Caco-2 (cell line): ENCODE measurements at regions of chr12 and their contacts with region 1.

Region 1: DNA sequence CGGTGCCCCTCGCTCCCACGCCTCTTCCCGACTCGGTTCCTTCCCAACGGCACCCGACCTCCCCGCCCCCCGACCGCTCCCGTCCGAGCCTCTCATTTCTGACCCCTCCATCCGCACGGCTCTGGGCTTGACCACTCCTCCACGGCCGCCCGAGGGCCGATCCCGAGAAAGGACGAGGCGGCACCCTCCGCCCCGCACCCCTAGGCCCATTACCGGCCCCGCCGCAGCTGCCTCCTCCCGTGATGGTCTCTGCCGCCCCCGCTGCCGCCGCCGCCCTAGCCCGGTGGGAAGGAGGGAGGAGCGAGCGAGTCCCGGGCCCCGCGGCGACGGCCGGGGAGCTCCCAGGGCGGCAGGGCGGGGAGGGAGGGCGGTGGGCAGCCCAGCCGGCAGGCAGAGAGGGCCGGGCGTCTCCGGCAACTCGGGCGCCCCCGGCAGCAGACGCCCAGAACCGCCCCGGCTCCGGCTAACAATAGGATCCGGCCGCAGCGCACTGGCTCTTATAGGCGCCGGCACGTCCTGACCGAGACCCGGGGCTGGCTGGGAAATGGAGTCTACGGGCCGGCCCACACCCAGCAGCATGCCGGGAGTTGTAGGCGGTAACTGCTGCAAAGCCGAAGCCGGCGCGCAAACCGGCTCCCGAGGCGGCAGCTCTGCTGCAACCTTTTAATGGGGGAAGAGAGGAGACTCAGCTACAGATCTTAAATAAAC is at the start of gene CSRNP2:
- DNase-seq: peak; percentile 98 to 99
- H3K4me3 ChIP-seq: peak within 1 kb of the TSS; percentile 85
- H3K4me3 Mint-ChIP-seq: peak within 1 kb of the TSS; percentile 96
- H3K27ac Mint-ChIP-seq: peak within 1 kb of the TSS; percentile 94
- H3K4me1 ChIP-seq: peaks cover 10% of the 10 kb centered on the region; the same call in 1 of the 2 replicates
- H3K4me1 Mint-ChIP-seq: peaks cover 16% of the 10 kb centered on the region
- H3K27me3 ChIP-seq: no peaks in the 10 kb centered on the region
- H3K27me3 Mint-ChIP-seq: no peaks in the 10 kb centered on the region
- CTCF ChIP-seq: peak in 1 of 2 experiments; percentile 2
- total RNA-seq, gene CSRNP2: 39.7 and 44.0 TPM in 2 replicates

Region 2: DNA sequence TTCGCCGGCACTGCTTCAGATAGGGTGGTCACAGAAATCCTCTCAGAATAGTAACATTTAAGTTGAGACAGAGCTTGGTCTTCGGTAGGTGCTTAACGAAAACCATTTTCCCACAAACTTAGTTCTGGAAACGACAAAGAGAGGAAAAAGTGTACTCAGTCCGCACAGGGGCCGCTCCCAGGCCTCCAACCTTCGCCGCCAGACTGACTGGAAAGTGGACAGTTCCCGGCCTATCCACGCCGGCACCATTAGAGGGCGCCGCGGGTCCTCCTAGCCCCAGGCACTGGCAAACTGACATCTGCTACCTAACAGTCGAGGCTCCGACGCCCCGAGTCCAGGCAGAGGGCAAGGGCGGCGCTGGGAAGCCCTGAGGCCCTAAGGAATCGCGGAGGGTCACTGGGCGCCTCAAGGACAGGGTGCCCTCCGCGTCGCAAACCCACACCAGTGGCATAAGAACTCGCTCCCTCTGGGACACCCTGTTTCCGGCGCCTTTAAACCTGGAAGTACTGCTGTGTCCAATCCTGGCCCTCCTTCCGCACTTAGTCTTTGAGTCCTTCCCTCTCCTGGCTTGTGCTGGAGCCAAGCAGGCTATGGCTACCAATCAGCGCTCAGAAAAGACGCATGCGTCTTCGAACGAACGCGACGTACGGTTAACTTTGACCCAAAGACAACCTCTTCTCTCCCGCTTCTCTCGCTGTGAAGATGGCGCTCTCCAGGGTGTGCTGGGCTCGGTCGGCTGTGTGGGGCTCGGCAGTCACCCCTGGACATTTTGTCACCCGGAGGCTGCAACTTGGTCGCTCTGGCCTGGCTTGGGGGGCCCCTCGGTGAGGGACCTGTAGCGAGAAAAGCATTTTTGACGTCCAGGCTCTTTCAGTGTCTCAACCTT is 35.4 kb before region 1 on chr12 and contains the start of gene LETMD1:
- CTCF ChIA-PET with region 1: interaction called, 3 read pairs
- POLR2A ChIA-PET with region 1: interaction called, 16 read pairs
- intact Hi-C with region 1: loop called (anchors 1 kb)
- DNase-seq: peak; percentile 96 to 98
- H3K4me3 ChIP-seq: peak within 1 kb of the TSS; percentile 64
- H3K4me3 Mint-ChIP-seq: peak within 1 kb of the TSS; percentile 99
- H3K27ac Mint-ChIP-seq: peak within 1 kb of the TSS; percentile 96
- H3K4me1 ChIP-seq: no peaks in the 10 kb centered on the region
- H3K4me1 Mint-ChIP-seq: no peaks in the 10 kb centered on the region
- H3K27me3 ChIP-seq: no peaks in the 10 kb centered on the region
- H3K27me3 Mint-ChIP-seq: no peaks in the 10 kb centered on the region
- CTCF ChIP-seq: peak; percentile 93 to 99
- total RNA-seq, gene LETMD1: 90.6 and 95.6 TPM in 2 replicates

Region 3: GRCh38 chr12:51059086-51059485 is 24.2 kb before region 1 on chr12:
- CTCF ChIA-PET with region 1: no interaction called
- POLR2A ChIA-PET with region 1: interaction called, 10 read pairs
- intact Hi-C with region 1: loop called (anchors 2 kb)
- DNase-seq: no peak
- H3K4me3 ChIP-seq: no peak overlapping the region
- H3K4me3 Mint-ChIP-seq: no peak overlapping the region
- H3K27ac Mint-ChIP-seq: no peak overlapping the region
- H3K4me1 ChIP-seq: peaks cover 9% of the 10 kb centered on the region
- H3K4me1 Mint-ChIP-seq: no peaks in the 10 kb centered on the region
- H3K27me3 ChIP-seq: no peaks in the 10 kb centered on the region
- H3K27me3 Mint-ChIP-seq: no peaks in the 10 kb centered on the region
- CTCF ChIP-seq: no peak

Region 4: GRCh38 chr12:51070004-51070403 is 13.3 kb before region 1 on chr12:
- CTCF ChIA-PET with region 1: interaction called, 4 read pairs
- POLR2A ChIA-PET with region 1: interaction called, 19 read pairs
- intact Hi-C with region 1: loop called (anchors 1 kb)
- DNase-seq: peak; percentile 73 to 87
- H3K4me3 ChIP-seq: no peak overlapping the region
- H3K4me3 Mint-ChIP-seq: no peak overlapping the region
- H3K27ac Mint-ChIP-seq: peak overlapping the region; percentile 79
- H3K4me1 ChIP-seq: peaks cover 10% of the 10 kb centered on the region; the same call in 1 of the 2 replicates
- H3K4me1 Mint-ChIP-seq: peaks cover 16% of the 10 kb centered on the region
- H3K27me3 ChIP-seq: no peaks in the 10 kb centered on the region
- H3K27me3 Mint-ChIP-seq: no peaks in the 10 kb centered on the region
- CTCF ChIP-seq: no peak

Region 5: GRCh38 chr12:51172515-51173431 is 89.5 kb after region 1 on chr12 and contains the start of gene TFCP2:
- CTCF ChIA-PET with region 1: no interaction called
- POLR2A ChIA-PET with region 1: interaction called, 4 read pairs
- intact Hi-C with region 1: loop called (anchors 1 kb)
- DNase-seq: peak; percentile 98 to 99
- H3K4me3 ChIP-seq: peak within 1 kb of the TSS; percentile 58
- H3K4me3 Mint-ChIP-seq: no peak within 1 kb of the TSS
- H3K27ac Mint-ChIP-seq: no peak within 1 kb of the TSS
- H3K4me1 ChIP-seq: peaks cover 6% of the 10 kb centered on the region; the same call in 1 of the 2 replicates
- H3K4me1 Mint-ChIP-seq: no peaks in the 10 kb centered on the region
- H3K27me3 ChIP-seq: no peaks in the 10 kb centered on the region
- H3K27me3 Mint-ChIP-seq: no peaks in the 10 kb centered on the region
- CTCF ChIP-seq: peak in 1 of 2 experiments; percentile 25
- total RNA-seq, gene TFCP2: 51.4 and 52.6 TPM in 2 replicates

Region 6: GRCh38 chr12:51217968-51218606 is 134.8 kb after region 1 on chr12 and contains the start of gene POU6F1:
- CTCF ChIA-PET with region 1: interaction called, 6 read pairs
- POLR2A ChIA-PET with region 1: interaction called, 24 read pairs
- intact Hi-C with region 1: loop called (anchors 1 kb)
- DNase-seq: peak; percentile 77 to 87
- H3K4me3 ChIP-seq: peak within 1 kb of the TSS; percentile 89
- H3K4me3 Mint-ChIP-seq: peak within 1 kb of the TSS; percentile 76
- H3K27ac Mint-ChIP-seq: peak within 1 kb of the TSS; percentile 94
- H3K4me1 ChIP-seq: peaks cover 6% of the 10 kb centered on the region; the same call in 1 of the 2 replicates
- H3K4me1 Mint-ChIP-seq: peaks cover 20% of the 10 kb centered on the region
- H3K27me3 ChIP-seq: no peaks in the 10 kb centered on the region
- H3K27me3 Mint-ChIP-seq: no peaks in the 10 kb centered on the region
- CTCF ChIP-seq: peak; percentile 75 to 84
- total RNA-seq, gene POU6F1: 4.1 and 5.3 TPM in 2 replicates

Region 7: DNA sequence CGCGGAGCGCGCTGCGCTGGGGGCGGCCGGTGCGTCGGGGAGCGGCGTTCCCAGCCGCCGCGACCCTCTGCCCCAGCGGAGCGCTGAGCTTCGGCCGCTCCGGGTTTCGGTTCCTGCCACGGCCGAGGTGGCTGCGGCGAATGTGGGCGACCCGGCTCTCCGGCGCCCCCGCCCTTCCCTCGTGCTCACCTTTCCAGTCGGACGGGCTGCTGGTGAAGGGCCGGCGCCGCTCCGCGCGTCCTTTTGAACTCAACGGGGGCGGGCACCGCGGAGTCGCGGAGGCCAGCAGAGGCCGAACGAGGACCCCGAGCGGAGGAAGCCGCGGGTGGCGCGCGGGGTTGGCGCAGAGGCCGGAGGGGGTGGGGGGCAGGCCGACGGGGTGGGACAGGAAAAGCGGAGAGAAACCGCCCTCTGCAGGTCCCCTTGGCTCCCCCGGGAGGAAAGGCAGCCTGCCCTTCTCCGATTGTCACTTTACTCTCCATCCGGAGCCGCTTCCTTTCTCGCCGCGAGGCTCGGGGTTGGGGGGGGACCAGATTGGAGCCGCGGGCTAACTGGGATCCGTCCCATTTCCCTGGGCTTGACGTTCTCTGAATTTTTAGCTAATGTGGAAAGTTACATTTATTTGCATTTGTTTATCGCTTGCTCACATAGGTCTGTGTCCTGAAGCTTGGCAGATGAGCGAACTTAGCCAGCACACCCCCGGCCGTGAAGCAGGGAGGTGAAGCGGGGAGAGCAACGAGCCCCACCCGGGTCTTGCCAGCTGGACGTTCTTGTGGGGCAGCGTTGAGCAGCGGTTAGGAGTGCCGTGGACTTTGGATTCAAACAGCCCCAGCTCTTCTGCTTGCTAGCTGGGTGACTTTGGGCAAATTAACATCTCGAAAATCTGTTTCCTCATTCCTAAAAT is 187.0 kb after region 1 on chr12 and contains the start of gene SMAGP:
- CTCF ChIA-PET with region 1: no interaction called
- POLR2A ChIA-PET with region 1: interaction called, 16 read pairs
- intact Hi-C with region 1: no loop called
- DNase-seq: peak; percentile 94 to 99
- H3K4me3 ChIP-seq: peak within 1 kb of the TSS; percentile 85
- H3K4me3 Mint-ChIP-seq: peak within 1 kb of the TSS; percentile 87
- H3K27ac Mint-ChIP-seq: peak within 1 kb of the TSS; percentile 99
- H3K4me1 ChIP-seq: peaks cover 21% of the 10 kb centered on the region
- H3K4me1 Mint-ChIP-seq: peaks cover 19% of the 10 kb centered on the region
- H3K27me3 ChIP-seq: no peaks in the 10 kb centered on the region
- H3K27me3 Mint-ChIP-seq: no peaks in the 10 kb centered on the region
- CTCF ChIP-seq: peak; percentile 1 to 12
- total RNA-seq, gene SMAGP: 95.1 and 108 TPM in 2 replicates

Region 8: GRCh38 chr12:51326762-51327439 is 243.6 kb after region 1 on chr12:
- CTCF ChIA-PET with region 1: no interaction called
- POLR2A ChIA-PET with region 1: no interaction called
- intact Hi-C with region 1: no loop called
- DNase-seq: peak in 1 of 2 experiments; percentile 67
- H3K4me3 ChIP-seq: no peak overlapping the region
- H3K4me3 Mint-ChIP-seq: peak overlapping the region; percentile 3
- H3K27ac Mint-ChIP-seq: peak overlapping the region; percentile 85
- H3K4me1 ChIP-seq: peaks cover 26% of the 10 kb centered on the region
- H3K4me1 Mint-ChIP-seq: peaks cover 37% of the 10 kb centered on the region
- H3K27me3 ChIP-seq: no peaks in the 10 kb centered on the region
- H3K27me3 Mint-ChIP-seq: no peaks in the 10 kb centered on the region
- CTCF ChIP-seq: no peak